Mammary epithelial cell (primary cell): ENCODE measurements at regions of chr14 and their contacts with region 1.

Region 1: GRCh38 chr14:77314043-77314442 is 6.6 kb downstream of the POMT2 start:
- DNase-seq: peak; percentile 93
- H3K4me3 ChIP-seq: no peak overlapping the region
- H3K27ac ChIP-seq: peak overlapping the region; percentile 31
- H3K4me1 ChIP-seq: peaks cover 45% of the 10 kb centered on the region
- H3K27me3 ChIP-seq: no peaks in the 10 kb centered on the region
- CTCF ChIP-seq: no peak

Region 2: DNA sequence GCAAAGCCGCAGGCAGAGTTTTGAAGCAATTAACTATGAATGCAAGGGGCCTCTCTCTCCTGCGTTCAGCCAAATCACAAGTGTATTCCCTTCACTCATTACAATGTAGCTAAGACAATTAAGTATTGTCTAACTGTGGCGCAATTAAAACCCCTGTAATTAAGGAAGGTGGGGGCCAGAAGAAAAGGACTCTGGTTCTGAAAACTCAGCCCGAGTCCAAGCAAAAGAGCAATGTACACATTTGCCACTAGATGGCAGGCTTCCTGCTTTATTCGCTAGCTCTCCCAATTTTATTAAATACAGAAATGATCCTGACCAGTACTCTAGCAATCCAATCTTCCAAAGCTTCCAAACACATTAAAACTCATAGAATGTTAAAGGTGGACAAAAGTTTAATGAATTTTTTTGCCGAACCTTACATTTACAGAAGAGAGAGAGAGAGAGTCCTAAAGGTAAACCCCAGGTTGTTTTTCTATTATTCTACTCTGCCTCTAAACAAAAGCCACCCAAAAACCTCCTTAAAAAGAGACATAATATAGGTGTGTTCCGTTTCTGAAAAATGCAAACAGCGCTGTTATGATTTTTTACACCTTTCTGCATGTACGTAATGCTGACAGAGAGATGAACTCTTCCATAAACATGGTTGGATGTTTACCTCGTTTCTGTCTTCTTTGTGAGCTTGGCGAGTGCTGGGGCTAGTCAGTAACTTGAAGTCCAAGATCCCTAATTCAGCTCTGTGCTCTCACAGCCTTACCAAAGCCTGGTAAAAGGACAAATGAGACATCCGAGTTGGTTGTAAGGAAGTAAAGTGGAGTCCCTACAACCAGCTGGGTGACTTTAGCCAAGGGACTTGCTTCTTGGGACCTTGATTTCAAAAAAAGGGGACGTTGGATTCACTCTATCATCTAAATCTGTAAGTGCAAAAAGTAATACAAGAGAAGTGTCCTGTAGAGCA is 603.7 kb before region 1 on chr14:
- CTCF ChIA-PET with region 1: no interaction called
- dilution Hi-C with region 1: no loop called
- in situ Hi-C with region 1: no loop called
- intact Hi-C with region 1: no loop called
- DNase-seq: peak; percentile 20
- H3K4me3 ChIP-seq: no peak overlapping the region
- H3K27ac ChIP-seq: no peak overlapping the region
- H3K4me1 ChIP-seq: no peaks in the 10 kb centered on the region
- H3K27me3 ChIP-seq: no peaks in the 10 kb centered on the region
- CTCF ChIP-seq: peak; percentile 69 to 77

Region 3: DNA sequence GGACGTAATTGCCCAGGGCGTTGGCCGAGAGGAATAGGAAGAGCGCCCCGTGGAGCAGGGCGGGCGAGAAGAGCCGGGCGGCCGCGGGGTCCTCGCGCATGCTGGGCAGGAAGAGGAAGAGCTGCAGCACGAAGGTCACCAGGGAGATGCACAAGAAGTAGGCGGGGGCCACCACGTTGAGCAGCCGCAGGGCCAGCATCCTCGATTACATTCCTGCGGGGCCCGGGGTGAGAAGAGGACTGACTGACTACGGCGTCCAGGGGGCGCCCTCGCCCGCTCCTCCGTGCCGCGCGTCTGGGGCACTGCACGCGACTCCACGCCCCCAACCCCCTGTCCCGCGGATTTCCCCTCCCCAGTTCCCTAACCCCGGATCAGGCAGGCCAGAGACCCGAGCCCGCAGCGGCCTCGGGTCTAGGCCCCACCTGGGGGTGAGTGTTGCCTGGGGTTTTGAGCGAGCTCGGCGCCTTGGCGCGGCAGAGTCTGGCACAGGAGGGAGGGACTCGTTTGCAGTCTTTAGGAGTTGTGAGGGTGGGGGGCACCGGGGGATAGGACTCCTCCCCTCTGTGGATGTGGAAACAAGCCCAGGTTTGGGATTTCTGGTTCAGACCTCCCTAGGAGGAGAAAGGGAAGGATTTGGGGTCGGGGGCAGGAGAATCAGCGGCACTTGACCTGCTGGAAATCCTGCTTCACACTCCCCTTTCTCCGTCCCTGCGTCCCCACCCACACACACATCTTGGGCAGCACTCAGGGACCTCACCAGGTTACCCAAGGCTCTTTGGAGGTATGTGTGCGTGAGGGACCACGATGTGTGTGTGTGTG is 174.3 kb before region 1 on chr14:
- CTCF ChIA-PET with region 1: no interaction called
- dilution Hi-C with region 1: no loop called
- in situ Hi-C with region 1: no loop called
- intact Hi-C with region 1: loop called (anchors 5 kb)
- DNase-seq: no peak
- H3K4me3 ChIP-seq: no peak overlapping the region
- H3K27ac ChIP-seq: no peak overlapping the region
- H3K4me1 ChIP-seq: peaks cover 15% of the 10 kb centered on the region
- H3K27me3 ChIP-seq: peaks cover 29% of the 10 kb centered on the region
- CTCF ChIP-seq: peak in 1 of 2 donors; percentile 52

Region 4: DNA sequence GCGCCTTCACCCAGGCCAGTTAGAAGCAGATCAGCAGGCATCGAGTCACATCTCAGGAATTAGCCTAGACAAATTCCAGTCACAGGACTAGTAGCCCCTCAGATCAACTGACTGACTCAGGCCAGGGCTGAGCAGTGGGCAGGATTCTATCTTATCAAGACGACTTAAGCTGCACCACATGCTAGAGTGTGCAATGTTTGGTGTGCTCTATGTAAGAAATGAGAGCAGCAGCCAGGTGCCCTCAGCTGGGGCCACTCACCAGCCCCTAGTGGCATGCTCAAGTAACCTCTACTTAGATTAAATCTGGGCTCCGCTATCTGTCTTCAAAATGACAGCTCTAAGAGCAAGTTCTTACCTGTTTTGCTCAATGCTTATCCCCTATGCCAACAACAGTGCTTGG is 23.3 kb before region 1 on chr14:
- CTCF ChIA-PET with region 1: interaction called, 28 read pairs
- dilution Hi-C with region 1: no loop called
- in situ Hi-C with region 1: no loop called
- intact Hi-C with region 1: no loop called
- DNase-seq: peak; percentile 12
- H3K4me3 ChIP-seq: no peak overlapping the region
- H3K27ac ChIP-seq: no peak overlapping the region
- H3K4me1 ChIP-seq: no peaks in the 10 kb centered on the region
- H3K27me3 ChIP-seq: no peaks in the 10 kb centered on the region
- CTCF ChIP-seq: peak; percentile 4 to 18